ENCODE measurements at regions of chr18 and their contacts with region 1.

Region 1: DNA sequence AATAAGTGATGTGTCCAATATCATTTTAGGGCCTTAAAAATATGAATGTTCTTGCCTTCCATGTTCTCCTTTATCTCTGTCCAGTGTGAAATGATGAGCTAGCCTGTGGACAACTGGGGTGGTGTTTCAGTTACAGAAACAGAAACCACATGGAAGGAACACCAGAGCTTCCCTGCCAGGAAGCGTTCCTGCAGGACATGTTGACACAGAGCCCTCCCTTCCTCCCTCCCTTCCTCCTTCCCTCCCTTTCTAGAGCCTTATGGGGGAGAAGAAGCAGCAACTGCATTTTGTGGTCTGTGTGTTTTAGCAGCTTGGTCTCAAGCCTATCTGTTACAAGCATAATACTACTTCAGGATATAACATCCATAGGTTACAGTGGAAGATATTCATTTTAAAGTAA is 539.7 kb upstream of the NETO1 start:
- DNase-seq: peak in 2 of 5 donors; percentile 13 to 25
- ATAC-seq: peak in 2 of 4 donors; percentile 39 to 67
- H3K4me3 ChIP-seq: no peak overlapping the region
- H3K27ac ChIP-seq: peak overlapping the region in 3 of 12 donors; percentile 14 to 33 (median 31)
- H3K4me1 ChIP-seq: peaks cover 0 to 31% (median 4%) of the 10 kb centered on the region in 12 donors
- H3K27me3 ChIP-seq: no peaks in the 10 kb centered on the region
- CTCF ChIP-seq: no peak
- POLR2A ChIP-seq: no peak

Region 2: GRCh38 chr18:73966954-73967353 is 559.4 kb after region 1 on chr18:
- intact Hi-C with region 1: loop called in 1 of 10 experiments (anchors 5 kb)
- DNase-seq: no peak
- ATAC-seq: no peak
- H3K4me3 ChIP-seq: no peak overlapping the region
- H3K27ac ChIP-seq: no peak overlapping the region
- H3K4me1 ChIP-seq: no peaks in the 10 kb centered on the region
- H3K27me3 ChIP-seq: no peaks in the 10 kb centered on the region
- CTCF ChIP-seq: no peak
- POLR2A ChIP-seq: no peak